ENCODE measurements at regions of chr15 and their contacts with region 1.

Region 1: GRCh38 chr15:41989259-41989933 is 17.0 kb upstream of the EHD4 start:
- DNase-seq: peak; percentile 54 to 75 (median 63)
- H3K4me3 ChIP-seq: no peak overlapping the region
- H3K27ac ChIP-seq: no peak overlapping the region
- H3K4me1 ChIP-seq: no peaks in the 10 kb centered on the region
- H3K27me3 ChIP-seq: no peaks in the 10 kb centered on the region

Region 2: GRCh38 chr15:41820791-41821423 is 168.5 kb before region 1 on chr15:
- CTCF ChIA-PET with region 1: no interaction called
- POLR2A ChIA-PET with region 1: no interaction called
- DNase-seq: no peak
- H3K4me3 ChIP-seq: no peak overlapping the region
- H3K27ac ChIP-seq: no peak overlapping the region
- H3K4me1 ChIP-seq: no peaks in the 10 kb centered on the region
- H3K27me3 ChIP-seq: no peaks in the 10 kb centered on the region

Region 3: GRCh38 chr15:41999290-42000285 is 10.2 kb after region 1 on chr15:
- CTCF ChIA-PET with region 1: interaction called, 48 read pairs
- POLR2A ChIA-PET with region 1: no interaction called
- DNase-seq: no peak
- H3K4me3 ChIP-seq: no peak overlapping the region
- H3K27ac ChIP-seq: no peak overlapping the region
- H3K4me1 ChIP-seq: no peaks in the 10 kb centered on the region
- H3K27me3 ChIP-seq: peaks cover 0 to 5% (median 0%) of the 10 kb centered on the region in 5 experiments

Region 4: GRCh38 chr15:42056934-42057779 is 67.8 kb after region 1 on chr15:
- CTCF ChIA-PET with region 1: interaction called, 53 read pairs
- POLR2A ChIA-PET with region 1: no interaction called
- DNase-seq: peak; percentile 71 to 78 (median 71)
- H3K4me3 ChIP-seq: peak overlapping the region in 6 of 7 experiments; percentile 20 to 70 (median 56)
- H3K27ac ChIP-seq: no peak overlapping the region
- H3K4me1 ChIP-seq: peaks cover 0 to 10% (median 7%) of the 10 kb centered on the region in 4 experiments
- H3K27me3 ChIP-seq: peaks cover 0 to 8% (median 5%) of the 10 kb centered on the region in 5 experiments

Region 5: GRCh38 chr15:42157981-42158765 is 168.8 kb after region 1 on chr15:
- CTCF ChIA-PET with region 1: no interaction called
- POLR2A ChIA-PET with region 1: no interaction called
- DNase-seq: peak; percentile 31 to 83 (median 68)
- H3K4me3 ChIP-seq: peak overlapping the region in 1 of 7 experiments; percentile 35
- H3K27ac ChIP-seq: no peak overlapping the region
- H3K4me1 ChIP-seq: peaks cover 0 to 10% (median 5%) of the 10 kb centered on the region in 4 experiments
- H3K27me3 ChIP-seq: no peaks in the 10 kb centered on the region